Sciatic nerve (tissue), 2 donors: ENCODE measurements at regions of chr2 and their contacts with region 1.

Region 1: DNA sequence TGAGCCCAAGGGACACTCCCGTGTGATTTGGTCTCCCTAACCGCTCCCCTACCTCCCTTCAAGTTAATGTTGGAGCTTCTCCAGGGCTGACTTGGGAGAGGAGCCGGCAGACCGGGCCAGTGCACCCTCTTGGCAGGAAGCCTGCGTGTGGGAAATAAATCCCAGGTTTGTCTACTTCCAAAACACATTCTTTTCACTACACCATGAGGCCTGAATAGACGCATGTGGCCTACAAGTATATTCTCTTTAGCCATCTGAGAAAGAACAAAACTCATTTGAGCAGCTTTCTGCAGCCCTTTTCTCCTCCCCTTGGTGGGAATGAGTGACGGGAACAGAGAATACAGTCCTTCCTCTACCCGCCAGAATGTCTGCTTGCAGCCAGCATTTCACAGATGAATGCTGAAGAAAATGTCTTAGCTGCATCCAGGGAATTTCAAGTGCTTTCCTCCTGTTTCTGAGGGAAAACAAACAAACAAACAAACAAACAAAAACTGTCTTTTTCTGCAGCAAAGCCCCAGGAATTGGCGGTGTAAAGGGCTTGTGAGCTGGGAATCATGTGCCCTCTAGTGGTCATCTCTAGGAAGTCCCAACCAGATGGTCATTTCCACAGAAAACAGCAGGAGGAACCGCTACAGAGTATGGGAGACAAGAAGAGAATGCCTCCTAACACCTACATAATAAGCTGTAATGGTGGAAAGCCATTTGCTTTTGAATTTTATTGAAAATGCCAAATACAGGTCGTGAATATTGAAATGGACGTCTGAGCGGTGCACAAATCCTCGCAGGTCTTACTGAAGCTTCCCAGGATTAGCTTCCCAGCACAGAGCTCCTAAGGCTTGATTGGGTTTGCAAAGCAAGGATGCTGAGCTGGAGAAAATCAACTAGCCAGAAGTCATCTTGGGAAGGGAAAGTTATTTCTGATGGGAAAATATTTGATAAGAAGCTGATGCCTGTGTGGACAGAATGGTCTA is 41.2 kb upstream of the DAPL1 start:
- DNase-seq: no peak
- ATAC-seq: peak; percentile 90

Region 2: GRCh38 chr2:158034199-158034866 is 719.6 kb before region 1 on chr2:
- intact Hi-C with region 1: loop called (anchors 10 kb)
- DNase-seq: no peak
- ATAC-seq: peak; percentile 80